ENCODE measurements at regions of chr17 and their contacts with region 1.

Region 1: DNA sequence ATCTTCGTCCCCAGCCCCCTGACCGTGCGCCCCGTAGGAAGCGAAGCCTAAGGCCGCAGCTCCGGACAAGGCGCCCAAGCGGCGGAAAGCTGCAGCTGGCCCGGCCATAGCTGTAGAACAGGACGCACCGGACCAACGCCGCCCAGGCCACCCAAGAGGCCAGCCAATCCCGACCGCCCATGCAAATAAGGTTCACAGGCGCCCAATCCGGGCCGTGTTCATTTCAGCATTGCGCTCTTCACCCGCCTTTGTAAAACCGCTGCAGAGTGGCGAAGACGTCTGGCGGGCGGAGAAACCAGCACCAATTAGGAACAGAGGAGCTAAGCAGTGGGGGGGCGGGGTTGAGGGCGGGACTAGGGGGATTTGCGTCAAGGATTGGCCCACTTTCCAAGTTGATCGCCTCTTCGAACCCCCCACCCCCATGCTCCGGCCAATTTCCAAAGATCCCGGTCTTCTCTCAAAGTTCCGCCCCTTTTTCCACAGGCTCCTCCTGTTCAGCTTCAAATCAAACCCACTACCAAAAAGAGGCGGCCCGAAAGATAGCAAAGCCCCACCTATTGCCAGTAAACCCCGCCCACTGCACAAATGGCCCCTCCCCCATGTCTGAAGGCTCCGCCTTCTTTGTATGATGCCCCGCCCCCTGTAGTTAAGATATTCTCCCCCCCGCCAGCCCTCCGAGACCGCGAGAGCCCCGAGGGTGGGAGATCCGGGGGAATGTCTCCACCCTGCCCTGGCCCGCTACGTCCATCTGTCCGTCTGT is at the start of gene TMEM256:
- DNase-seq: peak; percentile 99
- ATAC-seq: peak; percentile 94
- H3K4me3 Mint-ChIP-seq: peak within 1 kb of the TSS; percentile 89
- H3K27ac Mint-ChIP-seq: peak within 1 kb of the TSS; percentile 92
- H3K4me1 Mint-ChIP-seq: peaks cover 16% of the 10 kb centered on the region
- H3K27me3 Mint-ChIP-seq: peaks cover 2% of the 10 kb centered on the region
- total RNA-seq, gene TMEM256: 55.8 to 58.1 TPM

Region 2: DNA sequence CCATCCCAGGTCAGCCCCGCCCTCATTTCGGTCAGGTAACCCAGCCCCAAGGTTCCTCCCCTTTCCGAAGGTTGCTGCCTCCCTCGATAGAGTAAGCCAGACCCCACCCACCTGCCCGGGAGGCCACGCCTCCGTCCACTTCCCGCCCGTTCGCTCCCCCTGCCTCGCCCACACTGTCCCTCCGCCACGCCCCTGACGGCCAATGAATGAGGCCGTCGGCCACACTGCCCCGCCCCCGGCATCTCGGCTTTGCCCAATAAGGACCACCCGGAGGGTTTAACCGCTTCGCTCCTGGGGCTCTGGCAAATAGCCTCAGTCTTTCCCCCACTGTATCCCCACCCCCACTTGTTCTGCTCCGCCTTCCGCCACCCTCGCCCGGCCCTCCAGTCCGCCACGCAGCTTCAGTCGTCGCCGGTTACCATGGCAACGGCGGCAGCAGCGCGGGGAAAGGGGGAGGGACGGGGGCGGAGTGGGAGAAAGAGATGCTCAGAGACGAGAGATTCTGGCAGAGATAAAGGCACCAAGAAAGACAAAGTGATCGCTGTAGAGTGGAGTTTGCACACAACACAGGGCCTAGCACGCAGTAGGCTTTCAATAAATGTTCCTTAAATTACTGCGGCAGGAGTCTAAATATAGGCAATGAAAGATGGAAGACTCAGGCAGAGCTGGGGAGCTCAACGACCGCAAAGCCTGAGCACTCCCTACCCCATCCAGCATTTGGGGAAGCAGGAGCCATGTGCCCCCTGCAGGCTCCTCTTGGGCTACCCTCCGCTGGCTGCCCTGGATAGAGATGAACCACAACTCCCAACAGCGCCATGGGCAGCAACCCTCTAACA is 189.6 kb before region 1 on chr17:
- CTCF ChIA-PET with region 1: no interaction called
- POLR2A ChIA-PET with region 1: no interaction called
- intact Hi-C with region 1: loop called in 1 of 2 experiments (anchors 1 kb)
- DNase-seq: peak; percentile 100
- ATAC-seq: peak; percentile 82
- H3K4me3 Mint-ChIP-seq: peak overlapping the region; percentile 81
- H3K27ac Mint-ChIP-seq: peak overlapping the region; percentile 93
- H3K4me1 Mint-ChIP-seq: peaks cover 71% of the 10 kb centered on the region
- H3K27me3 Mint-ChIP-seq: peaks cover 7% of the 10 kb centered on the region

Region 3: DNA sequence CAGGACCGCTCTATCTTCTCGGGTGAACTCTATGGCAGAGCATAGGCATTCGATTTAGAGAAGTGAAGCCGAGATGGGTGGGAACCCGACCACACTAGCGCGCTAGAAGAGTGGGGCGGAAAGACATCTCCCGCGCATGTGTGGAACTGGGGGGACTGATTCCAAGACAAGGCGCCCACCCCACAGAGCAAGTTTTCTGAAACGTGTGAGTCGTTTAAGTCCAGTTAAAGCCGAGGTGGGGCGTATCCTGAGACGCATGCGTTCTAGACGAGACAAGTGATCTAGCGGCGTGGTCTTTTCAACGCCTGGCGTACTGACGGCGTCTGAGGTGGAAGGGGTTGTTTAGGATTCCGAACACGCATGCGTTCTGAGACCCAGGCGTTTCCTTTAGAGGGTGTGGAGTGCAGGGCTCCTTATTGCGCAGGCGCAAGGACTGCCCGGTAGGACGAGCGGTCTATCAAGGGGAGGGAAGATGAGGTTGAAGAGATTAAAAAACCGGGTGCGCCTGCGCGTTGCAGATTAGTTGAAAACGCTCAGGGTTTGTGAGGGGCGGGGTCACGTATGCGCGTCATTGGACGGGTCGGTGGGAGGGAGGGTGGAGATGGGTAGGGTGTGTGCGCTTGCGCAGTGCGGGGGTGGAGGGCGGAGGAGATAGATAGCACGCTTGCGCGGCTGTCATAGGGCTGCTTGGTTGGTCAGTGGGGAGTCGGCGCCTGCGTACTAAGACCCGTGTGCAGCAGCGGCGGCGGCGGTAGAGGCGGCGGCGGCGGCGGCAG is 97.1 kb before region 1 on chr17 and contains the start of gene EIF5A:
- CTCF ChIA-PET with region 1: no interaction called
- POLR2A ChIA-PET with region 1: no interaction called
- intact Hi-C with region 1: loop called in 1 of 2 experiments (anchors 1 kb)
- DNase-seq: peak; percentile 100
- ATAC-seq: peak; percentile 86
- H3K4me3 Mint-ChIP-seq: peak within 1 kb of the TSS; percentile 96
- H3K27ac Mint-ChIP-seq: peak within 1 kb of the TSS; percentile 100
- H3K4me1 Mint-ChIP-seq: peaks cover 36% of the 10 kb centered on the region
- H3K27me3 Mint-ChIP-seq: no peaks in the 10 kb centered on the region
- total RNA-seq, gene EIF5A: 780 to 934 TPM

Region 4: DNA sequence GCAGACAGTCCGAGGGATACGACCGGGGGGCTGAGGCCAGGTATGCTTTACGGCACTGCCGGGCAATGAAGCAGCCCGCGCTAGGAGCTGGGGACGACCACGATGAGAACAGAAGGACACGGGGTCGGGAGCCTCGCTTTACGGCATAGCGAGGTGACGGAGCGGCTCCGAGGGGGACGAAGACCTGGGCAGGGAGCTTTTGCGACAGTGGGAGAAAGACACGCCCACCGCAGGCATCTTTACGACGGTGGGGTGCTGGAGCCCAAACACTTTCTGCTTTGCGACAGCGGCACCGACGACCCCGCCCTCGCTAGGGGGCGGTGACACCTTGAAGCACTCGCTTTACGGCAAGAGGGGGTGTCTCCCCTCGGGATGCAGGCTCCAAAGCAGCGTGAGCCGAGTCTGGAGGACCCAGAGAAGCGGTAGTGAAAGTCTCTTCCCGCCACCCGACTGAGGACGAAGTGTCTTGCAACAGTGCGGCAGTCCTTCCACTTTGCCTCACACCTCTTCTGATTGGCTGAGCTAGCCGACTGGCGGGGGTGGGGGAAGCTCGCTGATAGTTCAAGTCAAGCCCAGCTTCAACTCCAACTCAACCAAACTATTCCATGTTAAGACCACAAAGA is 74.7 kb before region 1 on chr17:
- CTCF ChIA-PET with region 1: no interaction called
- POLR2A ChIA-PET with region 1: no interaction called
- intact Hi-C with region 1: loop called in 1 of 2 experiments (anchors 1 kb)
- DNase-seq: peak; percentile 98
- ATAC-seq: peak; percentile 69
- H3K4me3 Mint-ChIP-seq: peak overlapping the region; percentile 89
- H3K27ac Mint-ChIP-seq: peak overlapping the region; percentile 96
- H3K4me1 Mint-ChIP-seq: peaks cover 44% of the 10 kb centered on the region
- H3K27me3 Mint-ChIP-seq: no peaks in the 10 kb centered on the region

Region 5: GRCh38 chr17:7383742-7384488 is 20.2 kb before region 1 on chr17:
- CTCF ChIA-PET with region 1: interaction called, 4 read pairs
- POLR2A ChIA-PET with region 1: interaction called, 7 read pairs
- intact Hi-C with region 1: loop called in 1 of 2 experiments (anchors 1 kb)
- DNase-seq: peak; percentile 87
- ATAC-seq: peak; percentile 97
- H3K4me3 Mint-ChIP-seq: peak overlapping the region; percentile 73
- H3K27ac Mint-ChIP-seq: peak overlapping the region; percentile 70
- H3K4me1 Mint-ChIP-seq: peaks cover 10% of the 10 kb centered on the region
- H3K27me3 Mint-ChIP-seq: peaks cover 31% of the 10 kb centered on the region

Region 6: DNA sequence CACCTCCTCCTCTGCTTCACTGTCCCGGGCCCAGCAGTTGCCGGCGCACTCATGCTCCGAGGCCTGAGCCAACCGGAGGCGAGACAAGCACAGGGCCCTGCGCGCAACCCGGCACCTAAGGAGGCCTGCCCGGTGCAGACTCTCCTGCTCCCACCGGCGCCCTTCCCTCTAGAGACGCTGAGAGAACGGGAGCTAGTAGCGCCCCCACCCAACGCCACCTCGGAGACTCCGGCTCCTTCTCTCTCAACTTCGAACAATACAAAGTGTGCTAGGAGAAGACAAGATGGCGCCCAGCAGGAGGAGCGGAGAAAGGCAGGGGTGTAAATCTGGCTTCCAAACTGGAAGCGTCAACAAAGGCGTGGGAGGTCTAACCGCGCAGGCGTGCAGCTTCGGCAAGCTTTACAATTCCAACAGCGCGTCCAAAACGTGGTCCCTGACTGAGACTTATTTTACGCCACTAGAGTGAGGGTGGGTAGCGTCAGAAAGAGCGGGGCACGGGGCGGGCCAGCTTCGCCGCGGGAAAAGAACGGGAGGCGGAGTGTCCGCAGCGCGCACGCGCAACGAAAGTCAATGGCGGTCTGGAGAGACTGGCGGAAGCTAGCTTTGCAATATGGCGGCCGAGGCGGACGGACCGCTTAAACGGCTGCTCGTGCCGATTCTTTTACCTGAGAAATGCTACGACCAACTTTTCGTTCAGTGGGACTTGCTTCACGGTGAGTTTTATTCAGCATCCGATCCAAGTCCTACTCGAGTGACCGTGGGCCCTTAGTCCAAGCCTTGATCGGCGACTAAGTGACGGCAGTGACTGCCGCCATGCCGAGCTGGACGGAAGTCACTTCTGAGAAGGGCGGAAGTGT is 179.3 kb after region 1 on chr17 and contains the start of gene MPDU1:
- CTCF ChIA-PET with region 1: no interaction called
- POLR2A ChIA-PET with region 1: no interaction called
- intact Hi-C with region 1: loop called in 1 of 2 experiments (anchors 1 kb)
- DNase-seq: peak; percentile 98
- ATAC-seq: peak; percentile 77
- H3K4me3 Mint-ChIP-seq: peak within 1 kb of the TSS; percentile 82
- H3K27ac Mint-ChIP-seq: peak within 1 kb of the TSS; percentile 100
- H3K4me1 Mint-ChIP-seq: peaks cover 56% of the 10 kb centered on the region
- H3K27me3 Mint-ChIP-seq: no peaks in the 10 kb centered on the region
- total RNA-seq, gene MPDU1: 51.7 to 77.0 TPM